ENCODE measurements at regions of chr5 and their contacts with region 1.

Region 1: GRCh38 chr5:57221049-57221568 is 47.2 kb downstream of the GPBP1 start:
- DNase-seq: peak in 1 of 4 donors; percentile 32
- ATAC-seq: peak; percentile 70
- H3K4me3 ChIP-seq: no peak overlapping the region
- H3K27ac ChIP-seq: no peak overlapping the region
- H3K4me1 ChIP-seq: peaks cover 5% of the 10 kb centered on the region
- H3K27me3 ChIP-seq: no peaks in the 10 kb centered on the region
- CTCF ChIP-seq: peak; percentile 71 to 97 (median 94)
- POLR2A ChIP-seq: no peak

Region 2: GRCh38 chr5:56909294-56910209 is 311.6 kb before region 1 on chr5 and contains the start of gene SETD9:
- intact Hi-C with region 1: loop called (anchors 10 kb)
- DNase-seq: peak; percentile 99 to 100 (median 99)
- ATAC-seq: peak; percentile 89
- H3K4me3 ChIP-seq: peak within 1 kb of the TSS; percentile 26 to 56
- H3K27ac ChIP-seq: peak within 1 kb of the TSS; percentile 93 to 99 (median 96)
- H3K4me1 ChIP-seq: peaks cover 15% of the 10 kb centered on the region
- H3K27me3 ChIP-seq: no peaks in the 10 kb centered on the region
- CTCF ChIP-seq: no peak
- POLR2A ChIP-seq: peak; percentile 85 to 95 (median 92)
- total RNA-seq, gene SETD9: 4.6 to 10.1 TPM

Region 3: DNA sequence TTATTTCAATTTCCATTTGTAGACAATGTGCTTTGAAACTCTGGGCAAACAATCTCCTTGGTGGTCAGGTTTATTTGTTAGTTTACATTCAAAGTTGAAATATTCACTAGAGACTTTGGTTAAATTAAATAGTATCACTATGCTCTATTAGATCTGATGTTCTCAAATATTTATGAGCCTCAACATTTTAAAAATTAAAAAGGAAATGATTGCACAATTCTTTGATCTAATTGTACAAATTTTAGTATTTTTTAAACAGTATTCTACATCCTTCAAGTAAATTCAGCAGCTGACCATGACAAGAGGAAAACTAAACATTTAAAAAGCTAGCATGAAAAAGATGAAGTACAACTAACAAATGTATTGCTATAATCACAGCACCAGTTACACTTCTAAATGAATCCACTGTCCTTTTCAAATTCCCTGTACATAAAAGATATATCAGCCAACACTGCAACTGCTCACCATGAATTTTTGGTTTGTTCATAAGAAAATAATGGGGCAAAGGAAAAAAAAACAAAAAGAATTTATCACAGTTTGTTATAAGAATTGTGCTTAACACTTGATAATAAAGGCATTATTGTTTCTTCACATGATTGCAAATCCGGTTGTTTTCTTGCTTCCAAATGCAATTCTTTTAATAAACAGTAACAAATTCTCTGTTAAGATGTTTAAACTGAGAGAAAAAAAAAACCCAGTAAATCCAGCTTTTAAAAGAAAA is 301.0 kb before region 1 on chr5:
- intact Hi-C with region 1: no loop called
- DNase-seq: no peak
- ATAC-seq: no peak
- H3K4me3 ChIP-seq: no peak overlapping the region
- H3K27ac ChIP-seq: no peak overlapping the region
- H3K4me1 ChIP-seq: no peaks in the 10 kb centered on the region
- H3K27me3 ChIP-seq: no peaks in the 10 kb centered on the region
- CTCF ChIP-seq: no peak
- POLR2A ChIP-seq: no peak

Measured in body of pancreas (tissue), 4 donors.